K562 (cell line): ENCODE measurements at regions of chr4 and their contacts with region 1.

Region 1: DNA sequence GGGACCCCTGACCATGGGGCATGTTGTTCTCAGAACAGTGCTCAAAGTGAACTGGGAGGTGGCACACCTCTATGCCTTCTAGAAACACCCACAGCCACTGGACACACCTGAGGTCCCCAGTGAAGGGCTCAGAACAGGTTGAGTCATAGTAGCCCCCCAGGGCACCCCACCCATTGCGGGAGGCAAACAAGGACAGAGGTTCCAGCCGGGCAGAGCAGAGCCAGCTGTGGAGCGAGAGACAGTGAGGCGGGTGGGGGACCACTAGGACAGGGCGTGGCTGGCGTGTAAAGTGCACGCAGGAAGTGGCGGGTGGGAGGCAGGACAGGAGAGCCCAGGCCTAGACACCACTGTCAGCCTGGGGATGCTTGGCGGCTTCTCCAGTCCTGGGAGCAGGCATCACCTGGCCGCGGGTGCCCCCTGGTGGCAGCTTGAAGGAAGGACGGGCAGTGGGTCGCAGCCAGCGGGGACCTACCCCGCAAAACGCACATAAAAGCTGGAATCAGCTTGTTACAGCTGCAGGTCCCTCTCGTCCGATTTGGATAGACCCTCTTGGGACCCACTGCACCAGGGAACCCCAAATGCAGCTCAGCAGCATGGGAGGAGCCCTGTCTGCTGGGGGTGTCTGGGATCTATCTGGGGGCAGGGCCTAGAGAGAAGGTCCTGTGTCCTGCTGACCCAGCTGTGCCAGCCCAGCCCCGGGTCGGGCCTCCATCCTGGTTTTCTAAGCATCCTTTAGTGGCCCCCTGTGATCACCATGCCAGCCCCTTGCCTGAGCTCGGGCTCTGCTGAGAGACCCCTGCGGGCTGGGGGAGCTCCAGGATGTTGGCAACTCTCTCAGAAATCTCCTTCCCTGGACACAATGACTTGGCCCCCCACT is 57.6 kb downstream of the WFS1 start:
- DNase-seq: peak; percentile 79 to 88 (median 84)
- ATAC-seq: peak; percentile 91
- H3K4me3 ChIP-seq: no peak overlapping the region
- H3K27ac ChIP-seq: no peak overlapping the region
- H3K4me1 ChIP-seq: peaks cover 0 to 8% of the 10 kb centered on the region in 2 experiments; a peak in 2 of 5 replicates
- H3K27me3 ChIP-seq: peaks cover 10 to 44% of the 10 kb centered on the region in 2 experiments; a peak in 4 of 5 replicates
- CTCF ChIP-seq: peak; percentile 88 to 92 (median 91)
- EP300 ChIP-seq: no peak
- POLR2A ChIP-seq: no peak
- RAD21 ChIP-seq: peak; percentile 78 to 94

Region 2: GRCh38 chr4:5998333-5998936 is 328.8 kb before region 1 on chr4:
- CTCF ChIA-PET with region 1: interaction called, 4 read pairs
- POLR2A ChIA-PET with region 1: interaction called, 3 read pairs
- in situ Hi-C with region 1: loop called (anchors 5 kb)
- intact Hi-C with region 1: loop called (anchors 2 kb)
- DNase-seq: peak; percentile 63 to 78 (median 69)
- ATAC-seq: peak; percentile 93
- H3K4me3 ChIP-seq: no peak overlapping the region
- H3K27ac ChIP-seq: no peak overlapping the region
- H3K4me1 ChIP-seq: no peaks in the 10 kb centered on the region
- H3K27me3 ChIP-seq: peaks cover 0 to 7% of the 10 kb centered on the region in 2 experiments; a peak in 2 of 5 replicates
- CTCF ChIP-seq: peak; percentile 91 to 98 (median 94)
- EP300 ChIP-seq: no peak
- POLR2A ChIP-seq: no peak
- RAD21 ChIP-seq: peak; percentile 66 to 83

Region 3: GRCh38 chr4:6250235-6250983 is 76.9 kb before region 1 on chr4:
- CTCF ChIA-PET with region 1: interaction called, 19 read pairs
- POLR2A ChIA-PET with region 1: interaction called, 4 read pairs
- in situ Hi-C with region 1: loop called (anchors 5 kb)
- intact Hi-C with region 1: loop called (anchors 1 kb)
- DNase-seq: peak; percentile 61 to 68 (median 65)
- ATAC-seq: peak; percentile 78
- H3K4me3 ChIP-seq: no peak overlapping the region
- H3K27ac ChIP-seq: no peak overlapping the region
- H3K4me1 ChIP-seq: peaks cover 0 to 6% of the 10 kb centered on the region in 2 experiments; a peak in 1 of 5 replicates
- H3K27me3 ChIP-seq: peaks cover 0 to 5% of the 10 kb centered on the region in 2 experiments; a peak in 1 of 5 replicates
- CTCF ChIP-seq: peak; percentile 68 to 90 (median 75)
- EP300 ChIP-seq: no peak
- POLR2A ChIP-seq: no peak
- RAD21 ChIP-seq: peak; percentile 62 to 81

Region 4: DNA sequence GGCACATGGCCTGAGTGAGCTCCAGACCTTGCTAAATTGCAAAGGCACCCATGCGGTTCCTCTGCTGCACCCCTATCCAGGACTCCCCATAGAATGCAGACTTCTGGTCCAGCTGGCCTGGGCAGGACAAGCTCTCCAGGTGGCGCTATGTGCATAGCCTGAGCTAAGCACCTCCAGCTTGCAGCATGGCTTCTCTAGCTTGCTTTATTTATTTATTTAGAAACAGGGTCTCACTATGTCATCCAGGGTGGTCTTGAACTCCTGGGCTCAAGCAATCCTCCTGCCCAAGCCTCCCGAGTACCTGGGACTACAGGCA is 63.1 kb before region 1 on chr4:
- CTCF ChIA-PET with region 1: interaction called, 14 read pairs
- POLR2A ChIA-PET with region 1: no interaction called
- in situ Hi-C with region 1: no loop called
- intact Hi-C with region 1: loop called (anchors 1 kb)
- DNase-seq: peak in 1 of 4 experiments; percentile 45
- ATAC-seq: peak; percentile 87
- H3K4me3 ChIP-seq: no peak overlapping the region
- H3K27ac ChIP-seq: no peak overlapping the region
- H3K4me1 ChIP-seq: no peaks in the 10 kb centered on the region
- H3K27me3 ChIP-seq: no peaks in the 10 kb centered on the region; a peak in 1 of 5 replicates
- CTCF ChIP-seq: peak; percentile 67 to 73 (median 68)
- EP300 ChIP-seq: no peak
- POLR2A ChIP-seq: no peak
- RAD21 ChIP-seq: peak; percentile 43 to 74

Region 5: GRCh38 chr4:6546681-6547447 is 219.6 kb after region 1 on chr4:
- CTCF ChIA-PET with region 1: interaction called, 5 read pairs
- POLR2A ChIA-PET with region 1: no interaction called
- in situ Hi-C with region 1: no loop called
- intact Hi-C with region 1: loop called (anchors 5 kb)
- DNase-seq: peak; percentile 79 to 84 (median 82)
- ATAC-seq: peak; percentile 87
- H3K4me3 ChIP-seq: no peak overlapping the region
- H3K27ac ChIP-seq: no peak overlapping the region
- H3K4me1 ChIP-seq: no peaks in the 10 kb centered on the region
- H3K27me3 ChIP-seq: peaks cover 0 to 29% of the 10 kb centered on the region in 2 experiments; a peak in 2 of 5 replicates
- CTCF ChIP-seq: peak; percentile 89 to 93 (median 91)
- EP300 ChIP-seq: no peak
- POLR2A ChIP-seq: no peak
- RAD21 ChIP-seq: peak; percentile 54 to 78